PC-3 (cell line): ENCODE measurements at regions of chr15 and their contacts with region 1.

Region 1: GRCh38 chr15:68017191-68017590 is 36.9 kb upstream of the PIAS1 start:
- DNase-seq: peak; percentile 21
- ATAC-seq: no peak
- H3K4me3 ChIP-seq: no peak overlapping the region
- H3K27ac ChIP-seq: no peak overlapping the region
- H3K4me1 ChIP-seq: no peaks in the 10 kb centered on the region
- H3K27me3 ChIP-seq: no peaks in the 10 kb centered on the region
- CTCF ChIP-seq: no peak

Region 2: GRCh38 chr15:68691705-68692104 is 674.5 kb after region 1 on chr15:
- CTCF ChIA-PET with region 1: no interaction called
- POLR2A ChIA-PET with region 1: interaction called, 23 read pairs
- intact Hi-C with region 1: no loop called
- DNase-seq: peak; percentile 14
- ATAC-seq: no peak
- H3K4me3 ChIP-seq: no peak overlapping the region
- H3K27ac ChIP-seq: no peak overlapping the region
- H3K4me1 ChIP-seq: no peaks in the 10 kb centered on the region
- H3K27me3 ChIP-seq: no peaks in the 10 kb centered on the region
- CTCF ChIP-seq: no peak